ENCODE measurements at regions of chr12 and their contacts with region 1.

Region 1: GRCh38 chr12:32755654-32756475 is at the start of gene YARS2:
- DNase-seq: peak; percentile 81 to 92 (median 83)
- H3K4me3 ChIP-seq: peak within 1 kb of the TSS; percentile 97
- H3K4me3 Mint-ChIP-seq: peak within 1 kb of the TSS; percentile 84 to 98 (median 91)
- H3K27ac ChIP-seq: peak within 1 kb of the TSS; percentile 95
- H3K27ac Mint-ChIP-seq: peak within 1 kb of the TSS; percentile 88 to 97 (median 94)
- H3K4me1 ChIP-seq: peaks cover 14% of the 10 kb centered on the region
- H3K4me1 Mint-ChIP-seq: peaks cover 15 to 23% (median 19%) of the 10 kb centered on the region in 3 donors
- H3K27me3 ChIP-seq: no peaks in the 10 kb centered on the region
- H3K27me3 Mint-ChIP-seq: peaks cover 0 to 3% of the 10 kb centered on the region in 2 donors
- total RNA-seq, gene YARS2: 29.0 to 34.8 TPM

Region 2: GRCh38 chr12:31651893-31652521 is 1103.9 kb before region 1 on chr12:
- CTCF ChIA-PET with region 1: interaction called, 33 read pairs
- POLR2A ChIA-PET with region 1: interaction called, 7 read pairs
- DNase-seq: no peak
- H3K4me3 ChIP-seq: no peak overlapping the region
- H3K4me3 Mint-ChIP-seq: peak overlapping the region in 4 of 7 donors; percentile 20 to 73 (median 52)
- H3K27ac ChIP-seq: no peak overlapping the region
- H3K27ac Mint-ChIP-seq: peak overlapping the region in 6 of 8 donors; percentile 34 to 93 (median 61)
- H3K4me1 ChIP-seq: peaks cover 4% of the 10 kb centered on the region
- H3K4me1 Mint-ChIP-seq: peaks cover 9 to 12% (median 11%) of the 10 kb centered on the region in 3 donors
- H3K27me3 ChIP-seq: no peaks in the 10 kb centered on the region
- H3K27me3 Mint-ChIP-seq: peaks cover 0 to 12% of the 10 kb centered on the region in 2 donors

Region 3: GRCh38 chr12:32455607-32456071 is 300.2 kb before region 1 on chr12:
- CTCF ChIA-PET with region 1: interaction called, 15 read pairs
- POLR2A ChIA-PET with region 1: no interaction called
- DNase-seq: peak in 2 of 5 donors; percentile 16 to 33
- H3K4me3 ChIP-seq: no peak overlapping the region
- H3K4me3 Mint-ChIP-seq: peak overlapping the region in 5 of 7 donors; percentile 4 to 54 (median 16)
- H3K27ac ChIP-seq: no peak overlapping the region
- H3K27ac Mint-ChIP-seq: peak overlapping the region in 2 of 8 donors; percentile 14 to 16
- H3K4me1 ChIP-seq: no peaks in the 10 kb centered on the region
- H3K4me1 Mint-ChIP-seq: peaks cover 3 to 8% (median 4%) of the 10 kb centered on the region in 3 donors
- H3K27me3 ChIP-seq: no peaks in the 10 kb centered on the region
- H3K27me3 Mint-ChIP-seq: peaks cover 0 to 7% of the 10 kb centered on the region in 2 donors

Region 4: GRCh38 chr12:32727237-32727636 is 28.6 kb before region 1 on chr12:
- CTCF ChIA-PET with region 1: interaction called, 13 read pairs
- POLR2A ChIA-PET with region 1: no interaction called
- DNase-seq: no peak
- H3K4me3 ChIP-seq: no peak overlapping the region
- H3K4me3 Mint-ChIP-seq: no peak overlapping the region
- H3K27ac ChIP-seq: no peak overlapping the region
- H3K27ac Mint-ChIP-seq: peak overlapping the region in 2 of 8 donors; percentile 17 to 52
- H3K4me1 ChIP-seq: no peaks in the 10 kb centered on the region
- H3K4me1 Mint-ChIP-seq: peaks cover 0 to 4% (median 0%) of the 10 kb centered on the region in 3 donors
- H3K27me3 ChIP-seq: no peaks in the 10 kb centered on the region
- H3K27me3 Mint-ChIP-seq: no peaks in the 10 kb centered on the region

Region 5: DNA sequence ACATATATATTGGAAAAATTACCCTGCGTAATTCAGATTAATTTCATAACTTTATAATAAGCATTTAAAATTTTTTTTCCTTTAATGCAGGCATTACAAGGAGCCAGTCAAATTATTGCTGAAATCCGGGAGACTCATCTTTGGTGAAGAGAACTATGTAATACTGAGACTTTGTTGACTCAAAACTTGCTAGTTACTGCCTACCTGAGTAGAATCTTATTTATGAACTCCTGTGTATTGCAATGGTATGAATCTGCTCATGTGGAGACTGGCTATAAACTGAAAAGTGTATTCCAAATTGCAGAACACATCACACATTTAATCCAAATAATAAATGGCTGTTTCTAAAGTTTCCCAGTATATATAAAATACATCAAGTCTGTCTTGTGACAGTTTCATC is 12.6 kb before region 1 on chr12:
- CTCF ChIA-PET with region 1: interaction called, 11 read pairs
- POLR2A ChIA-PET with region 1: no interaction called
- DNase-seq: no peak
- H3K4me3 ChIP-seq: no peak overlapping the region
- H3K4me3 Mint-ChIP-seq: no peak overlapping the region
- H3K27ac ChIP-seq: no peak overlapping the region
- H3K27ac Mint-ChIP-seq: no peak overlapping the region
- H3K4me1 ChIP-seq: no peaks in the 10 kb centered on the region
- H3K4me1 Mint-ChIP-seq: peaks cover 6 to 33% (median 32%) of the 10 kb centered on the region in 3 donors
- H3K27me3 ChIP-seq: no peaks in the 10 kb centered on the region
- H3K27me3 Mint-ChIP-seq: no peaks in the 10 kb centered on the region

Region 6: DNA sequence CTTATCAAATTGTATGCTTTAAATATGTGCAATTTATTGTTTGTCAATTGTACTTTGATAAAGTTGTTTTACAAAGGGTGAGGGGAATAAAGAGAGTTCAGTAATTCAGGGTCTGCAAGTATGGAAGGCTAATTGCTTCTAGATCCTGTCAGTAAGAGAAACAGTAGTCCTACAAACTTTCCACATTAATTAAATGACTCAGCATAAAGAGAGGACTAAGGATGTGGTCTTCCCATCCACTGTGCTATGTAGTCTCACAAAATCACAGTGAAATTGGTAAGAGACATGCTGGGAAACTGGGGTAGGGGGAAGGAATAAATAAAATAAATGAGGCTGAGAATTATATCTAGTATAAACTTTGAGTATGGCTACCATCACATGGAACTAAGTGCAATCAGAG is 270.9 kb after region 1 on chr12:
- CTCF ChIA-PET with region 1: no interaction called
- POLR2A ChIA-PET with region 1: no interaction called
- DNase-seq: no peak
- H3K4me3 ChIP-seq: no peak overlapping the region
- H3K4me3 Mint-ChIP-seq: no peak overlapping the region
- H3K27ac ChIP-seq: no peak overlapping the region
- H3K27ac Mint-ChIP-seq: no peak overlapping the region
- H3K4me1 ChIP-seq: no peaks in the 10 kb centered on the region
- H3K4me1 Mint-ChIP-seq: no peaks in the 10 kb centered on the region
- H3K27me3 ChIP-seq: no peaks in the 10 kb centered on the region
- H3K27me3 Mint-ChIP-seq: no peaks in the 10 kb centered on the region

Region 7: DNA sequence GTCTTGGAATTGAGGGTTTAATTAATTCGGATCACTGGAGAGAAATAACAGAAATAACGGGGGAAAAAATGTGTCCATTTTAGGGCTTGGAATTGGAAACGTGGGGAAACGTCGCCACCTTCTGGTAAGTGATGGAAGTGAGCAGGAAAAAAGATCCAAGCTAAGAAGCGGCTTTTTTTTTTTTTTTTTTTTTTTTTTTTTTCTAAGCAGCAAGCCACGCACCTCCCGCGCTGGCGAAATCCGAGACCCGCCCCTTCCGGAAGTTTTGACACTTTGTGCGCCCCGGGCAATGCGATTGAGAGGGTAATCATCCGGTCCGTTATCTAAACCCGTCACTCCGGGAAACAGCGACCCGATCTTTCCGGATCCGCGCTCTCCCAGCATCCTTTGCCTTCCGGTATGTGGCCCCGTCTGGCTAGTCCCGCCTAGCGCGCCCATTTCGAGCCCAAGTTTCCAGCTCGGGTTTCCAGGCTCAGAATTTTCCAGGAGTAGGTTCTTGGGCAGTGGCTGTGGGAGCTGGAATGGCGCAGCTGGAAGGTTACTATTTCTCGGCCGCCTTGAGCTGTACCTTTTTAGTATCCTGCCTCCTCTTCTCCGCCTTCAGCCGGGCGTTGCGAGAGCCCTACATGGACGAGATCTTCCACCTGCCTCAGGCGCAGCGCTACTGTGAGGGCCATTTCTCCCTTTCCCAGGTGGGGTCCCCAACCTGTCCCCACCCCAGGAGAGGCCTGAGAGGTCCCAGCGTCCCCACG is 1266.4 kb after region 1 on chr12 and contains the start of gene ALG10:
- CTCF ChIA-PET with region 1: interaction called, 52 read pairs
- POLR2A ChIA-PET with region 1: interaction called, 44 read pairs
- DNase-seq: peak; percentile 91 to 98 (median 95)
- H3K4me3 ChIP-seq: peak within 1 kb of the TSS; percentile 96
- H3K4me3 Mint-ChIP-seq: peak within 1 kb of the TSS; percentile 93 to 97 (median 94)
- H3K27ac ChIP-seq: peak within 1 kb of the TSS; percentile 93
- H3K27ac Mint-ChIP-seq: peak within 1 kb of the TSS; percentile 93 to 100 (median 98)
- H3K4me1 ChIP-seq: peaks cover 17% of the 10 kb centered on the region
- H3K4me1 Mint-ChIP-seq: peaks cover 25 to 38% (median 32%) of the 10 kb centered on the region in 3 donors
- H3K27me3 ChIP-seq: no peaks in the 10 kb centered on the region
- H3K27me3 Mint-ChIP-seq: peaks cover 0 to 8% of the 10 kb centered on the region in 2 donors
- total RNA-seq, gene ALG10: 19.8 to 23.3 TPM